SK-N-SH (cell line): ENCODE measurements at regions of chr7 and their contacts with region 1.

Region 1: GRCh38 chr7:135274495-135275268 is 41.0 kb downstream of the STRA8 start:
- DNase-seq: peak; percentile 85
- H3K4me3 ChIP-seq: no peak overlapping the region
- H3K27ac ChIP-seq: no peak overlapping the region
- H3K4me1 ChIP-seq: no peaks in the 10 kb centered on the region
- H3K27me3 ChIP-seq: no peaks in the 10 kb centered on the region; the same call in 1 of the 2 replicates
- CTCF ChIP-seq: peak; percentile 94
- EP300 ChIP-seq: no peak
- RAD21 ChIP-seq: peak; percentile 93

Region 2: DNA sequence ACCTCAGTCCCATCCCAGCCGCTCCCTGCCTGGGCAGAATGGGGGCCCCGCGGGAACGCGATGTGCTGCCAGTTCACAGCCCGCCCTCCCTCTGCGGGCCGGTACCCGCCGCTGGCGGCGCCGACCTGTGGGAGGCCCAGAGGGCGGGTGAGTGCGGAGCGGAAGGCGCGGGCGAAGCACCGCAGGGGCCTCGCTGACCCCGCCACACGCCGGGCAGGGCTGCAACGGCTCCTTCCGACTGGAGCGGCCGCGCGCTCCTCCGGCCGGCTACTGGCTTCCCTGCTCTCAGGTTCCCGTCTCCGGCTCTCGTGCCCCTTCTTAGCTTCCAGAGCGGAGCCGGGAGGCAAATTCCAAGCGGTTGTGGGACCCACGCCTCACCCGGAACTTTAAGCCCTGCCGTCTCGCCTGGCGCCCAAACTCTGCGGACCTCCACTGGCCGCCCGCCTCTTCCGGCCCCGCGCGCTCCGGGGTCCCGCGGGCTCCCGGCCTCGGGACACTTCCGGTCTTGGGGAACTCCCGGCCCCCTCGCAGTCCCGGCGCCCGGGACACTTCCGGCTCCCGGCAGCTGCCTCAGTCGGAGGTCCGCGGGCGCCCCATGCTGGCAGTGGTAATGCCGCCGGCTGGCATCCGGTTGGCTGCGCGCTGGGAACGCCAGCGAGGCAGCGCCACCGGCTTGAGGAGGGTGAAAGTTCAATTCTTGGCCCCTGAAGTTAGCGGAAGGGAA is 104.2 kb before region 1 on chr7 and contains the start of gene CYREN:
- CTCF ChIA-PET with region 1: interaction called, 12 read pairs
- POLR2A ChIA-PET with region 1: no interaction called
- DNase-seq: peak; percentile 100
- H3K4me3 ChIP-seq: peak within 1 kb of the TSS; percentile 89 to 97
- H3K27ac ChIP-seq: peak within 1 kb of the TSS; percentile 90 to 97
- H3K4me1 ChIP-seq: peaks cover 3 to 24% of the 10 kb centered on the region in 2 experiments; a peak in 3 of 4 replicates
- H3K27me3 ChIP-seq: no peaks in the 10 kb centered on the region
- CTCF ChIP-seq: peak; percentile 78
- EP300 ChIP-seq: peak in 1 of 2 experiments; percentile 23; a peak in 3 of 4 replicates
- RAD21 ChIP-seq: peak; percentile 77
- polyA plus RNA-seq, gene CYREN: 53.4 and 60.6 TPM in 2 replicates

Region 3: GRCh38 chr7:135260930-135261721 is 13.6 kb before region 1 on chr7:
- CTCF ChIA-PET with region 1: interaction called, 72 read pairs
- POLR2A ChIA-PET with region 1: no interaction called
- DNase-seq: peak; percentile 57
- H3K4me3 ChIP-seq: no peak overlapping the region
- H3K27ac ChIP-seq: no peak overlapping the region
- H3K4me1 ChIP-seq: peaks cover 0 to 14% of the 10 kb centered on the region in 2 experiments; a peak in 1 of 4 replicates
- H3K27me3 ChIP-seq: no peaks in the 10 kb centered on the region
- CTCF ChIP-seq: no peak
- EP300 ChIP-seq: no peak
- RAD21 ChIP-seq: no peak

Region 4: GRCh38 chr7:135320277-135320676 is 45.6 kb after region 1 on chr7:
- CTCF ChIA-PET with region 1: interaction called, 48 read pairs
- POLR2A ChIA-PET with region 1: no interaction called
- DNase-seq: peak; percentile 90
- H3K4me3 ChIP-seq: no peak overlapping the region
- H3K27ac ChIP-seq: peak overlapping the region; percentile 28 to 89; a peak in 3 of 4 replicates
- H3K4me1 ChIP-seq: peaks cover 0 to 35% of the 10 kb centered on the region in 2 experiments; a peak in 2 of 4 replicates
- H3K27me3 ChIP-seq: no peaks in the 10 kb centered on the region
- CTCF ChIP-seq: no peak
- EP300 ChIP-seq: peak; percentile 30 to 37; a peak in 2 of 4 replicates
- RAD21 ChIP-seq: peak; percentile 28; the same call in 1 of the 2 replicates

Region 5: GRCh38 chr7:135362871-135363270 is 88.2 kb after region 1 on chr7:
- CTCF ChIA-PET with region 1: interaction called, 18 read pairs
- POLR2A ChIA-PET with region 1: no interaction called
- DNase-seq: no peak
- H3K4me3 ChIP-seq: no peak overlapping the region
- H3K27ac ChIP-seq: no peak overlapping the region
- H3K4me1 ChIP-seq: peaks cover 0 to 5% of the 10 kb centered on the region in 2 experiments; a peak in 1 of 4 replicates
- H3K27me3 ChIP-seq: no peaks in the 10 kb centered on the region
- CTCF ChIP-seq: peak; percentile 33
- EP300 ChIP-seq: no peak
- RAD21 ChIP-seq: no peak

Region 6: DNA sequence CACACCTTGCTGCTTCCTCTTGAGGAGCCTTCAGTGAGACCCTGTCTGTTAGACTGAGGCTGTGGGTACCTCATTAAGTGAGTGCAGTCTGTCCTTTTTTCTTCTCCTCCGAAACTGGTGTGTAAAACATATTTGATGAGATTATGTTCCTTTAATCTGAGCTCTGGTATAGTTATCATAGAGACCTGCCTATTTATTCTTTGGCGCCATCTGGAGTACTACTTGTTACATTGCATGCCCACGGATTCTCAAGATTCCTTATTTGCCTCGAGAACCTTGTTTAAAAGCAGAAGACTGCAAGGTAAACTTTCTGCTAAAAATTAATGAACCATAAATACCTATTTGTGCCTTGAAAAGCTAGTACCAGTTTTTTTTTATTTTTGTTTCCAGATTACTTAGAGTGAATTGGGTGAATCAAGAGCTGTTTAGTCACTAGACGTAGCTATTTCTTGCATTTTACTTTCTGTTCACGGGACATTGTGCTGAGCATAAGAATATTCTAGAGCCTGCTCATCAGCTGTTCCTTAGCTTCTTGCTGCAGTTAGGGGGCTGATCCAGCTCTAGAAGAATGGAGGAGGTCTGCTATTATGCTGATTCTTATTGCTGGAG is 370.7 kb after region 1 on chr7:
- CTCF ChIA-PET with region 1: interaction called, 61 read pairs
- POLR2A ChIA-PET with region 1: no interaction called
- DNase-seq: peak; percentile 62
- H3K4me3 ChIP-seq: no peak overlapping the region
- H3K27ac ChIP-seq: peak overlapping the region in 1 of 2 experiments; percentile 24; a peak in 2 of 4 replicates
- H3K4me1 ChIP-seq: peaks cover 0 to 6% of the 10 kb centered on the region in 2 experiments; a peak in 2 of 4 replicates
- H3K27me3 ChIP-seq: no peaks in the 10 kb centered on the region
- CTCF ChIP-seq: peak; percentile 92
- EP300 ChIP-seq: no peak
- RAD21 ChIP-seq: peak; percentile 80